HEK293T (cell line): ENCODE measurements at regions of chr1 and their contacts with region 1.

Region 1: GRCh38 chr1:156767101-156767878 is at the start of gene PRCC:
- DNase-seq: peak; percentile 95

Region 2: DNA sequence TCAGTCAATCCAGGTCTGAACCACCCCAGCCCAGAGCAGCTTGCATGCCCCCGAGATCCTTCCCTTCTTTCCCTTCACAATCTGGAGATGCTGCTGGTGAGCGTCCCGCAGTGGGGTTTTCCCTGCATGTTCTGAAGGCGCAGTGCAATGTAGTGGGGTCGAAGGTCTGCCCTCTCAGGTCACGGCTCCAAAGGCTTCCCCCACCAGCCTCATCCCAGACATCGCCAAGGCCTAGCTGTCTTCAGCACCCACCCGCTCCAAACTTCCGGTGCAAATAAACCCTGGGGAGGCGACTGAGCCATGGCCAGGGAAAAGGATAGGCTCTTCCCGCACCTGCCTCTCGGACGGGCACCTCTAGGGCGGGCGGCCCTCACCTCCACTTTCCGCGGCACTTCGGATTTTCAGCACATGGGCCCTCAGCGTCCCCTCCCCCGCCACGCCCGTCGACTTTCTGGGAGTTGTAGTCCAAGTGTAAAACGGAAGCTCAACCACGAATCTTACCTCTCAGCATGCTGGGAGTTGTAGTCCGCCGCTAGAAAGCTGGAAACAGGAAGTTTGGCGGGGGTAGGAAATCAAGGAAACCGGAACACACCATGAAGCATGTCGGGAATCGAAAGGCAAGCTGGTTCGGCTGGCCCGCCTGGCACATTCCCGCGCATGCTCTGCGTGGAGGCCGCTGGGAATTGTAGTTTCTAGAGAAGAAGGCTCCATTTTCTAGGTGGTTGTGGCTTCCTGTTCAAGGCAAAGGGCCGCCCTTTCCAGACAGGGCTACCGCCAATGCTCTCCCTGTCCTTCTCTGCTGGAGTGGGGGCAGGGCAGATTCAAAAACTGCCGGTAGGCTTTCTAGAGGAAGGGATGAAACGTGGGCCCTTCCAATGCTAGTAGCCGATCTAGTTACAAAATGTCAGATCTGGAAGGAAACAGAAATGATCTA is 26.3 kb before region 1 on chr1 and contains the start of gene MRPL24:
- CTCF ChIA-PET with region 1: interaction called, 3 read pairs
- POLR2A ChIA-PET with region 1: interaction called, 123 read pairs
- DNase-seq: peak; percentile 98

Region 3: GRCh38 chr1:156746728-156747631 is 20.3 kb before region 1 on chr1:
- CTCF ChIA-PET with region 1: interaction called, 5 read pairs
- POLR2A ChIA-PET with region 1: interaction called, 123 read pairs
- DNase-seq: peak; percentile 72

Region 4: DNA sequence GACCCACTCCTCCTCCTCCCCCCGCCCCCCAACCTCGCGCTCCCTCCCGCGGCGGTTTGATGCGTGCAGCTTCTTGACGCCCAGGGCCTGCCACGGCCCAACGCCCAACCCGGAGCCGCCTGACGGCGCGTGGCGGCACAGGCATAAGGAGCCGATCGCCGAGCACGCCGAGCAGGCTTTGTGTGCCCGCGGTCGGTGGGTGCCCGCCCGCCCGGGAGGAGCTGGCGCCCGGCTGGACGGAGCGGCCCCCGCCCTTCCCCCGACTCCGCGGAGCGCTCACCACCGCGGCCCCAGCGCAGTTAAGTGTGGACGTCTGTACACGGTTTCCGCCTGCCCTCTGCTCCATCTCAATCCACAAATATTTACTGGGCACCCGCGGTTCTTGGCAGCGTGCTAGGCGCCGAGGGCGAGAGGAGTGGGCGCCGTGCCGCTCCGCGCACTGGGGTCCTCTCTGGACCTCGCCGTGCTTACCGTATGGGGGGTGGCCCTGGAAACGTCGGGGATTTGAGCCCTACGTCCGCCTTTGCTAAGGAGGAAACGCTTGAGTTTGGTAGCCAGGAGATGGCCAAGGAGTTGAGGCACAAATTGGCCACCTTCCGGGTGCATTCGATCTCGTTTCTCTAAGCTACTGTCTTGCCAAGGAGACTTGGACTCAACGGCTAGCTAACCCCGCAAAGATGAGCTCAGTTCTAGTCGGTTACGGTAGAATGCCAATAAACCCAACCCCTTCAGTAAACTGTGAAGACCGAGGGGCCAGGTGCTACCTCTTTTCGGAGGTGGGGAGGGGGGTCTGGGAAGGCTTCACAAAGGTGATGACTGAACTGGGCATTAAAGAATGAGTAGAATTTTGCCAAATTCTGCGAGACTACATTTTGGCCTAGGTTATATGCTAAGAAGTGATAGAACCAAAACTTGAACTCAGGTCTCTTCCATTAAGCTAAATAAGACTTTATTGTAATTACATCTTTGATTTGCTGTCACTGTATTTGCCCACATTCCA is 15.2 kb before region 1 on chr1:
- CTCF ChIA-PET with region 1: interaction called, 5 read pairs
- POLR2A ChIA-PET with region 1: interaction called, 80 read pairs
- DNase-seq: peak; percentile 93

Region 5: GRCh38 chr1:156781585-156782186 is 14.4 kb after region 1 on chr1:
- CTCF ChIA-PET with region 1: no interaction called
- POLR2A ChIA-PET with region 1: interaction called, 10 read pairs
- DNase-seq: no peak